ENCODE measurements at regions of chr21 and their contacts with region 1.

Region 1: DNA sequence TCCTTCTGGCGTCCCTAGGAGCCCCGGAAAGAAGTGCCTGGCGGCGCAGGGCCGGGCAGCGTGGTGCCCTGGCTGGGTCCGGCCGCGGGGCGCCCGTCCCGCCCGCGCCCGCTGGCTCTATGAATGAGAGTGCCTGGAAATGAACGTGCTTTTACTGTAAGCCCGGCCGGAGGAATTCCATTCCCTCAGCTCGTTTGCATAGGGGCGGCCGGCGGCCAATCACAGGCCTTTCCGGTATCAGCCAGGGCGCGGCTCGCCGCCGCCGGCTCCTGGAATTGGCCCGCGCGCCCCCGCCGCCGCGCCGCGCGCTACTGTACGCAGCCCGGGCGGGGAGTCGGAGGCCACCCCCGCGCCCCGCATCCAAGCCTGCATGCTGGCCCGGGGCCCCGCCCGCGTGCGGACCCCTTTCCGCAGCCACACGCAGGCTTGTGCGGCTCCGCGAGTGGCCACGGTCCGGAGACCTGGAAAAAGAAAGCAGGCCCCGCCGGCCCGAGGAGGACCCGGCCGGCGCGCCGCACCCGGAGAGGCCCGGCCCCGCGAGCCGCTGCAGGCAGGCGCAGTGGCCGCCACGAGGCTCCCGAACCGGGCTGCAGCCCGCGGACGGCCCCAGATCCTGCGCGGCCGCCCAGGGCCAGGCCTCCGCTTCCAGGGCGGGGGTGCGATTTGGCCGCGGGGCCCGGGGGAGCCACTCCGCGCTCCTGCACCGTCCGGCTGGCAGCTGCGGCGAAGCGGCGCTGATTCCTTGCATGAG is 160.4 kb downstream of the RUNX1 start:
- DNase-seq: peak; percentile 96
- H3K4me3 ChIP-seq: peak overlapping the region; percentile 62
- H3K27ac ChIP-seq: peak overlapping the region; percentile 98
- H3K4me1 ChIP-seq: peaks cover 9% of the 10 kb centered on the region
- H3K27me3 ChIP-seq: peaks cover 19% of the 10 kb centered on the region
- CTCF ChIP-seq: no peak

Region 2: GRCh38 chr21:34795175-34795547 is 93.6 kb before region 1 on chr21:
- intact Hi-C with region 1: loop called (anchors 5 kb)
- DNase-seq: peak; percentile 49
- H3K4me3 ChIP-seq: no peak overlapping the region
- H3K27ac ChIP-seq: peak overlapping the region; percentile 69
- H3K4me1 ChIP-seq: peaks cover 14% of the 10 kb centered on the region
- H3K27me3 ChIP-seq: no peaks in the 10 kb centered on the region
- CTCF ChIP-seq: no peak

Region 3: DNA sequence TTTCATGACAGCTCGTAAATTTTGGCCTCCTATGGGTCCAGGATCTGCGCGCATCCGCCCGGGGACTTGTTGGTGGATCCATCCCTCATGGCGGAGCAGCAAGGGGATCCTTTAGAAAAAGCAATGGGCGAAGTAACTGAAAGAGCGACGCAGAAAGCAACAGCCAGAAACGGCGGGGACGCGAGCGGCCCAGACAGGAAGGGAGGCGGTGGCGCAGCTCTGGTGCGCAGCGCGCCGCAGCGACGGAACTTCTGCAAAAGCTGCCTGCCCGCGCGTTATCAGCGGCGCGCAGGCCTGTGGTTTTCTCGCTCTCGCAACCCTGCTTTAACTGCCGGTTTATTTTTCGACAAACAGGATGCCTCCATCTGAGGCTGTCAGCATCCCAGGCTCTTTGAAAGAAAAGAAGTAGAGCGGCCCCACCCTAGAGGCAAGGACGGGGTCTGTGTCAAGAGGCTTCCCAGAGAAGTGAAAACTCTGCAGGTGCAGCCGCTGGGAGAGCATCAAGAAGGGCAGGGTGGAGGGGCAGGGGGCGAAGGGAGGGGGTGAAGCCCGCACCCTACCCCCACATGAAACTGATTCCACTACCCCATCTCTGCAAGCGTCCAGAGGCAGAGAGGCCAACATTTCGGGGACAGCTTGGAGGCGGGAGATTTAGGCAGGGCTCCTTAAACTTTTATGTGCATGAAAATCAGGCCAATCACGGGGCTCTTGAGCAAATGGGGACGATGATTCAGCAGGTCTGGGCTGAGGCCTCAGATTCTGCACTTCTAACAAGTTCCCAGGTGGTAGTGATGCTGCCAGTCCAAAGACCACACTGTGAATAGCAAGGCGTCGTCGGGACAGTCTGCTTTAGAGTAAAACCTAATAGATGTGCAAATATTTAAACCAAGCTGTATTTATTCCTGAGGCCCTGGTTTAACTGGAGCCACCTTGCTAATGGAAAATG is 138.1 kb after region 1 on chr21:
- intact Hi-C with region 1: loop called (anchors 10 kb)
- DNase-seq: peak; percentile 63
- H3K4me3 ChIP-seq: peak overlapping the region; percentile 7
- H3K27ac ChIP-seq: peak overlapping the region; percentile 61
- H3K4me1 ChIP-seq: peaks cover 9% of the 10 kb centered on the region
- H3K27me3 ChIP-seq: no peaks in the 10 kb centered on the region
- CTCF ChIP-seq: no peak

Region 4: GRCh38 chr21:35189077-35189863 is 300.5 kb after region 1 on chr21:
- intact Hi-C with region 1: no loop called
- DNase-seq: no peak
- H3K4me3 ChIP-seq: no peak overlapping the region
- H3K27ac ChIP-seq: no peak overlapping the region
- H3K4me1 ChIP-seq: no peaks in the 10 kb centered on the region
- H3K27me3 ChIP-seq: no peaks in the 10 kb centered on the region
- CTCF ChIP-seq: no peak

Region 5: GRCh38 chr21:35204850-35205541 is 316.3 kb after region 1 on chr21:
- intact Hi-C with region 1: loop called (anchors 10 kb)
- DNase-seq: peak; percentile 60
- H3K4me3 ChIP-seq: no peak overlapping the region
- H3K27ac ChIP-seq: peak overlapping the region; percentile 20
- H3K4me1 ChIP-seq: no peaks in the 10 kb centered on the region
- H3K27me3 ChIP-seq: no peaks in the 10 kb centered on the region
- CTCF ChIP-seq: no peak

Region 6: GRCh38 chr21:35400233-35400957 is 511.7 kb after region 1 on chr21:
- intact Hi-C with region 1: loop called (anchors 2 kb)
- DNase-seq: peak; percentile 50
- H3K4me3 ChIP-seq: no peak overlapping the region
- H3K27ac ChIP-seq: no peak overlapping the region
- H3K4me1 ChIP-seq: no peaks in the 10 kb centered on the region
- H3K27me3 ChIP-seq: no peaks in the 10 kb centered on the region
- CTCF ChIP-seq: peak; percentile 39

Measured in colonic mucosa (tissue), 4 donors.